CD8-positive, alpha-beta memory T cell (primary cell): ENCODE measurements at regions of chr3 and their contacts with region 1.

Region 1: DNA sequence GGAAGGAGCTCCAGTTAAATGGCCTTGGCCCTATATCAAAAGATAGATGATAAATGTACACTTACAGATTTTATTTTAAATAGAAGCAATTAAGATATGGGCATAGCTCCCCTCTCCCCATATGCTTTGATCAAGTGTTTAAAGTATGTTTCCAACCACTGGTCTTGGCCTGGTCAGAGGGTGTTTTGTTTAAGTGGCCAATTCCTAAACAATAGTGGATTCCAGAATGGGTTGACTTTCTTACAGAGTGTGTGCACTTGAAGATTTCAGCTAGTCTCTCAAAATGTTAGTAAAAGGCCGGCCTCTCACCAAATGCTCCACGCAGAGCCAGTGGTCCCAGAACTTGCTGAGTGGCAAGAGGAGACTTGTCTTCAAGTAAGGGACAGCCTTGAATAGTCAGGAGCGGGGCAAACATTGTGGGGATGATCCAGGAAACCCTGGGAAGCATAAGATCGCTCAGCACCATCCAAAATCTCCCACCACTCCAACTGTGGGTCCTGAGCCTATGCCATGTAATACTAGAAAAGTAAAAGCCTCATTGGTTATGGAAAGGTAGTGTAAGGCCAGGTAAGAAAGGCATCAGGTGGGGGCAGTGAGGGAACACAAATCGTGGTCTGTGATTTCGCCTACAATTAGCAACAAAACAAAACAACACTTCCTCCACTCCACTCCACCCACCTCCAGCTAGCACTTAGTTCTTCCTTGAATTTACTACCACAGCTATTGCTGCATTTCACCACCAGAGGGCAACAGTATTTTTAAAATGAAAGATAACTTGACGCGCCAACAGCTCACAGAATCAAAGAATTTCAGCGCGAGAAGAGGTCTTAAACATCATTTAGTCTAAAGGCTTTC is 4.8 kb downstream of the RARRES1 start:
- DNase-seq: peak in 4 of 5 donors; percentile 7 to 52 (median 36)
- H3K4me3 ChIP-seq: no peak overlapping the region
- H3K4me3 Mint-ChIP-seq: peak overlapping the region; percentile 1 to 73 (median 42)
- H3K27ac ChIP-seq: no peak overlapping the region
- H3K27ac Mint-ChIP-seq: peak overlapping the region in 6 of 8 donors; percentile 1 to 79 (median 59)
- H3K4me1 ChIP-seq: peaks cover 14% of the 10 kb centered on the region
- H3K4me1 Mint-ChIP-seq: peaks cover 21 to 34% (median 31%) of the 10 kb centered on the region in 3 donors
- H3K27me3 ChIP-seq: no peaks in the 10 kb centered on the region
- H3K27me3 Mint-ChIP-seq: peaks cover 3 to 5% of the 10 kb centered on the region in 2 donors

Region 2: GRCh38 chr3:158337110-158337509 is 390.3 kb before region 1 on chr3:
- CTCF ChIA-PET with region 1: no interaction called
- POLR2A ChIA-PET with region 1: no interaction called
- DNase-seq: no peak
- H3K4me3 ChIP-seq: no peak overlapping the region
- H3K4me3 Mint-ChIP-seq: no peak overlapping the region
- H3K27ac ChIP-seq: no peak overlapping the region
- H3K27ac Mint-ChIP-seq: no peak overlapping the region
- H3K4me1 ChIP-seq: no peaks in the 10 kb centered on the region
- H3K4me1 Mint-ChIP-seq: no peaks in the 10 kb centered on the region
- H3K27me3 ChIP-seq: no peaks in the 10 kb centered on the region
- H3K27me3 Mint-ChIP-seq: no peaks in the 10 kb centered on the region

Region 3: GRCh38 chr3:158590223-158590622 is 137.2 kb before region 1 on chr3:
- CTCF ChIA-PET with region 1: no interaction called
- POLR2A ChIA-PET with region 1: no interaction called
- DNase-seq: no peak
- H3K4me3 ChIP-seq: no peak overlapping the region
- H3K4me3 Mint-ChIP-seq: no peak overlapping the region
- H3K27ac ChIP-seq: no peak overlapping the region
- H3K27ac Mint-ChIP-seq: no peak overlapping the region
- H3K4me1 ChIP-seq: no peaks in the 10 kb centered on the region
- H3K4me1 Mint-ChIP-seq: no peaks in the 10 kb centered on the region
- H3K27me3 ChIP-seq: no peaks in the 10 kb centered on the region
- H3K27me3 Mint-ChIP-seq: peaks cover 1 to 4% of the 10 kb centered on the region in 2 donors

Region 4: DNA sequence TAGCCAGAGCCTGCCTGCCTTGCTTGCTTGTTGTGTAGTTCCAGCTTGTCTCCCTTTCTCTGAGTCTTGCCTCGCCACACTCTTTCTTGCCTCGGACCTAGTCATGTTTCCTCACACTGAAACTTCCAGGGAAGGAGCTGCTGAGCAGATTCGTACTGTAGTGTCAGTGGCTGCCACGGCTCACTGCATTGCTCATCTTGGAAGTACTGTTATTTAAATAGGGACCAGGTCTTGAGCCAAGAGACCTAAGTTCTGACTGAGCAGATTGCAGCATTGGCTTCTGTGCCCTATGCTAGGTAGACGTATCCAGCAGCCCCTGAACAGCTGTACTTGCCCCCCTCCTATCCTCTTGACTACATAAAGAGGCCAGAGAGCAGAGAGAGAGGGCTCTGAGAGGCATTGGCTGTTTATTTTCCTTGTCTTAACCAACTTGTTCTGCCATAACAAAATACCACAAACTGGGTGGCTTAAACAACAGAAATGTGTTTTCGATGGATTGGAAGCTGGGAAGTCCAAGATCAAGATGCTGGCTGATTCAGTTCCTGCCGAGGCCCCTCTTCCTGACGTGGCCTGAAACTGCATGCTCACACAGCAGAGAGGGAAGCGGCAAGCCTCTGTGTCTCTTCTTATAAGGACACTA is 10.7 kb after region 1 on chr3:
- CTCF ChIA-PET with region 1: interaction called, 14 read pairs
- POLR2A ChIA-PET with region 1: interaction called, 3 read pairs
- DNase-seq: no peak
- H3K4me3 ChIP-seq: no peak overlapping the region
- H3K4me3 Mint-ChIP-seq: no peak overlapping the region
- H3K27ac ChIP-seq: no peak overlapping the region
- H3K27ac Mint-ChIP-seq: no peak overlapping the region
- H3K4me1 ChIP-seq: no peaks in the 10 kb centered on the region
- H3K4me1 Mint-ChIP-seq: peaks cover 8 to 20% (median 11%) of the 10 kb centered on the region in 3 donors
- H3K27me3 ChIP-seq: no peaks in the 10 kb centered on the region
- H3K27me3 Mint-ChIP-seq: peaks cover 0 to 1% of the 10 kb centered on the region in 2 donors

Region 5: DNA sequence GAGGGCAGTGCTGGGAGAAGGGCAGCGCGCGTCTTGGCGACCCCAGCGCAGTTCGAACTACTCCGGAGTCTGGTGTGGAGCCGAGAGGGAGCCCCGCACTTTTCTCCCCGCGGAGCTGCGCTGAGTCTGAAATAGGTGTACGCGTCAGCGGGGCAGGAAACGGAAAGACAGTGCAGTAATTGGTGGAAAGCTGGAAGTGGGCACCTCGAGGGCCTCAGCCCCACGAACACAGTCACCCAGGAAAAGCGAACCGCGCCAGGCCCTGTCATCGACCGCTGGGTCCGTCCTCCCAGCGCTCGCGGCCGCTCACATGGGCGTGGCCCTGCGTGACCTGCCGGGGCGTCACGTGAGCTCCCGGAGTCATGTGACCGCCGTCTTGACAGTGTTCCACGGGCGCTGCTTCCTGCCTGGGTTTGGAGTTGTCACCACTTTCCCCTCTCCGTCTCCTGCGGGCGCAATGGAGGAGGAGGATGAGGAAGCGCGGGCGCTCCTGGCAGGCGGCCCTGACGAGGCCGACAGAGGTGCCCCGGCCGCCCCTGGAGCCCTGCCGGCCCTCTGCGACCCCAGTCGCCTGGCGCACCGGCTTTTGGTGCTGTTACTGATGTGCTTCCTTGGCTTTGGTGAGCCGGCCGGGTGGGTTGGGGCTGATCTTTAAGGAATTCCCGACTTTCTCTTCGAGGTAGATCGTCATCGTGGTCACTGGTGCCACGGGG is 74.4 kb after region 1 on chr3 and contains the start of gene MFSD1:
- CTCF ChIA-PET with region 1: interaction called, 24 read pairs
- POLR2A ChIA-PET with region 1: no interaction called
- DNase-seq: peak; percentile 85 to 93 (median 87)
- H3K4me3 ChIP-seq: peak within 1 kb of the TSS; percentile 95
- H3K4me3 Mint-ChIP-seq: peak within 1 kb of the TSS; percentile 80 to 95 (median 90)
- H3K27ac ChIP-seq: peak within 1 kb of the TSS; percentile 71
- H3K27ac Mint-ChIP-seq: peak within 1 kb of the TSS; percentile 71 to 97 (median 92)
- H3K4me1 ChIP-seq: peaks cover 33% of the 10 kb centered on the region
- H3K4me1 Mint-ChIP-seq: peaks cover 26 to 54% (median 46%) of the 10 kb centered on the region in 3 donors
- H3K27me3 ChIP-seq: no peaks in the 10 kb centered on the region
- H3K27me3 Mint-ChIP-seq: no peaks in the 10 kb centered on the region
- total RNA-seq, gene MFSD1: 25.3 to 26.4 TPM